Activated CD4-positive, alpha-beta T cell treated with anti-CD3 and anti-CD28 coated beads for 36 hours (primary cell): ENCODE measurements at regions of chr5 and their contacts with region 1.

Region 1: DNA sequence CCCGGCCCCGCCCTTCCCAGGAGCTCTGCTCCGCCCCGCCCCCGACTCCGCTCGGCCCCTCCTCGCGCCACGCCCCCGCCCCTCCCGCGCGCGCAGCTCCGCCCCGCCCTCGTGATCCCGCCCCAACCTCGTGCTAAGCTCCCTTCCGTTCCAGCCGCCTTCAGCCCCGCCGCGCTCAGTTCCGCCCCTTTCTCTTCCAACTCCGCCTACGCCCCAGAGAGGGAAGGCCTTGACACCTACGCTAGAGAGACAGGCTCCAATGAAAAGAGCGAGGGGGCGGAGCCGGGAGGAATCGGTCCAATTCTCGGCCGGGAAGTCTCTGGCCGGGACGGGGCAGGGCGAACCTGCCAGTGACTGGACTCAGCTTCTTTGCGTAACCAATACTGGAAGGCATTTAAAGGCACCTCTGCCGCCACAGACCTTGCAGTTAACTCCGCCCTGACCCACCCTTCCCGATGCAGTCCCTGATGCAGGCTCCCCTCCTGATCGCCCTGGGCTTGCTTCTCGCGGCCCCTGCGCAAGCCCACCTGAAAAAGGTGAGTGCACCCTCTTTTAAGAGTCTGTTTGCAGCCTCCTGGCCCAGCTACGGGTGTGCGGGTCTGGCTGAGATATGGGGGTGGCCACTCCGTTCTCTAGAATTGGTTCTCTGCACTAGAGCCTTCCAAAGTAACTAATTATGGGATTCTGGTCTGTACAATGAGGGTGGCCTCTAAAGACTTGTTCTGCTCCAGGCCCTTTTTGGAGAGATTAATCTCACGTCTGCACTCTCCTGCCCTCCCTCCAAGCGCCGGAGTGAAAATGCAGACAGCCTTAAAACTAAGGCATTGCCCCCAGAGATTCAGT is at the start of gene GM2A:
- DNase-seq: peak; percentile 99
- ATAC-seq: peak; percentile 94
- H3K4me3 Mint-ChIP-seq: peak within 1 kb of the TSS; percentile 85
- H3K27ac Mint-ChIP-seq: peak within 1 kb of the TSS; percentile 90
- H3K4me1 Mint-ChIP-seq: peaks cover 38% of the 10 kb centered on the region
- H3K27me3 Mint-ChIP-seq: no peaks in the 10 kb centered on the region
- total RNA-seq, gene GM2A: 17.2 to 19.3 TPM

Region 2: GRCh38 chr5:150479416-150479815 is 773.6 kb before region 1 on chr5:
- CTCF ChIA-PET with region 1: no interaction called
- POLR2A ChIA-PET with region 1: no interaction called
- intact Hi-C with region 1: loop called in 1 of 2 experiments (anchors 5 kb)
- DNase-seq: no peak
- ATAC-seq: no peak
- H3K4me3 Mint-ChIP-seq: no peak overlapping the region
- H3K27ac Mint-ChIP-seq: no peak overlapping the region
- H3K4me1 Mint-ChIP-seq: no peaks in the 10 kb centered on the region
- H3K27me3 Mint-ChIP-seq: peaks cover 5% of the 10 kb centered on the region

Region 3: GRCh38 chr5:151080623-151081430 is 172.2 kb before region 1 on chr5 and contains the start of gene TNIP1:
- CTCF ChIA-PET with region 1: no interaction called
- POLR2A ChIA-PET with region 1: interaction called, 3 read pairs
- intact Hi-C with region 1: loop called (anchors 1 to 5 kb)
- DNase-seq: peak; percentile 96
- ATAC-seq: peak; percentile 67
- H3K4me3 Mint-ChIP-seq: peak within 1 kb of the TSS; percentile 80
- H3K27ac Mint-ChIP-seq: peak within 1 kb of the TSS; percentile 91
- H3K4me1 Mint-ChIP-seq: peaks cover 74% of the 10 kb centered on the region
- H3K27me3 Mint-ChIP-seq: no peaks in the 10 kb centered on the region
- total RNA-seq, gene TNIP1: 351 to 408 TPM

Region 4: DNA sequence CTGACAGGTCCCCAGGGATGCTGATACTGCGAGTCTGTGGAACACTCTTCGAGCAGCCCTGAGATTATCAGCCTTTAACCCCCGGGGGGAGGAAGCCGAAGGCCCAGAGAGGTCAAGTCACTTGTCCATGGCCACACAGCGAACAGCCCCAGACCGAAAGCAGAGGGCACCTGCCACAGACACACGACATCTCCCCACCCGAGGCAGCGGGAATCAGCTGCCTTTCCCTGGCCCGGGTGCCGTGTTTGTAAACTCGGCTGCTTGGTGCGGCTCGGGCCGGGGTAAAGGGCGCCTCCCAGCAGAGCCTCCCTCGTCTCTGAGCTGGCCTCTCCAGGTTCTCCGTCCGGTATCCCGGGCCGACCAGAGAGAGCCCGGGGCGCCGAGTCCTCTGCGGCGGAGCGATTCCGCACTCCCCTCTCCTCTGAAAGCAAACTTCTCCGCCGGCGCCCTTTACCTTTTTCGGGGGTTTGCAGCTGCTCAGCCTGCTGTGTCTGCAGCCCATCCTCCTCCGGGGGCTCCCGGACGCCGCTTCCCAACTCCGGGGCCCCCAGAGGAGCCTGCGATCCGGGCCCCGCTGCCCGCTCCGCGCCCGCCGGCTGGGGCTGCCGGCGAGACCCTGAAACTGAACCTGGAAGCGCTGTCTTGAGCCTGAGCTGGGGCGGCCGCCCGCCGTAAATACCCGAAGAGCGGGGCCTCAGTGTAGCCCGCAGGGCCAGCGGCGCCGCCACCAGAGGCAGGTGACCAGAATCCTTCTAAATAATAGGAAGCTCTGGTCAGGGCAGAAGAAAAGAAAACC is 29.3 kb before region 1 on chr5 and contains the start of gene CCDC69:
- CTCF ChIA-PET with region 1: interaction called, 11 read pairs
- POLR2A ChIA-PET with region 1: interaction called, 4 read pairs
- intact Hi-C with region 1: loop called in 1 of 2 experiments (anchors 1 kb)
- DNase-seq: peak; percentile 75
- ATAC-seq: peak; percentile 50
- H3K4me3 Mint-ChIP-seq: peak within 1 kb of the TSS; percentile 87
- H3K27ac Mint-ChIP-seq: peak within 1 kb of the TSS; percentile 94
- H3K4me1 Mint-ChIP-seq: peaks cover 57% of the 10 kb centered on the region
- H3K27me3 Mint-ChIP-seq: no peaks in the 10 kb centered on the region
- total RNA-seq, gene CCDC69: 24.8 to 26.9 TPM

Region 5: GRCh38 chr5:151270599-151270998 is 17.6 kb after region 1 on chr5:
- CTCF ChIA-PET with region 1: interaction called, 7 read pairs
- POLR2A ChIA-PET with region 1: interaction called, 4 read pairs
- intact Hi-C with region 1: loop called (anchors 1 kb)
- DNase-seq: peak; percentile 16
- ATAC-seq: peak; percentile 97
- H3K4me3 Mint-ChIP-seq: no peak overlapping the region
- H3K27ac Mint-ChIP-seq: no peak overlapping the region
- H3K4me1 Mint-ChIP-seq: no peaks in the 10 kb centered on the region
- H3K27me3 Mint-ChIP-seq: no peaks in the 10 kb centered on the region

Region 6: DNA sequence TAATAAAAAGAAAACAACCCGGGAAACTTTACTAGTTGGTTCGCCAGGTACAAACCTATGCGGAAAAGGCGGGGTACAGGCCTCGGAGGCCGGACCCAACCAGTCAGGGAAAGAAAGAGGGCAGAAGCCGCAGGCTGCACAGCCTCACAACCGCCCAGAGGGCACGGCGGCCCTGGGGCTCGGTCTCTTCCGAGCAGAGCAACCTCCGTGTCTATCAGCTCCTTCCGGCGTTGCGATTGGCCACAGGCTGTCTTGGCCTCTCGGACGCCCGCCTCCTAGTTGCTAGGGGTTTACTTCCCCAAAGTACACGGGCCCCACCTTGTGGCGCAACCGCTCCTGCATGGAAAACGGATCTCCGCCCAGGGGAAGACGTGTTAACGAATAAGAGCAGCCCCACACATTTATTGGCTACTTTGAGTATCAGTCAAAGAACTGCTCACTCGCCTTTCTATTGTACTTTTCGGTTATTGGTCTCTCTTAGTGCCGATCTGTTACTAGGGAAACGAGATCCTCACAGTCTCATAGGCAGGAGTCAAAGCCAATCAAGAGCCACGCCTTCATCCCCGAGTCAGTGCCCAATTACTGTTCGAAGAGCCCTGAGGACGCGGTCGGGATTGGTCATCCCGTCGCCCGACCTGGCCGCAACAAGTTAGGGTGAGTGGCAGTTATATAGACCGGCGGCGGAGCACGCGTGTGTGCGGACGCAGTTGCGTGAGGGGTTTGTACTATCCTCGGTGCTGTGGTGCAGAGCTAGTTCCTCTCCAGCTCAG is 518.5 kb after region 1 on chr5 and contains the start of gene G3BP1:
- CTCF ChIA-PET with region 1: no interaction called
- POLR2A ChIA-PET with region 1: interaction called, 3 read pairs
- intact Hi-C with region 1: loop called (anchors 1 to 5 kb)
- DNase-seq: peak; percentile 100
- ATAC-seq: peak; percentile 84
- H3K4me3 Mint-ChIP-seq: no peak within 1 kb of the TSS
- H3K27ac Mint-ChIP-seq: peak within 1 kb of the TSS; percentile 73
- H3K4me1 Mint-ChIP-seq: peaks cover 32% of the 10 kb centered on the region
- H3K27me3 Mint-ChIP-seq: no peaks in the 10 kb centered on the region
- total RNA-seq, gene G3BP1: 253 to 280 TPM